ENCODE measurements at regions of chr11 and their contacts with region 1.

Region 1: DNA sequence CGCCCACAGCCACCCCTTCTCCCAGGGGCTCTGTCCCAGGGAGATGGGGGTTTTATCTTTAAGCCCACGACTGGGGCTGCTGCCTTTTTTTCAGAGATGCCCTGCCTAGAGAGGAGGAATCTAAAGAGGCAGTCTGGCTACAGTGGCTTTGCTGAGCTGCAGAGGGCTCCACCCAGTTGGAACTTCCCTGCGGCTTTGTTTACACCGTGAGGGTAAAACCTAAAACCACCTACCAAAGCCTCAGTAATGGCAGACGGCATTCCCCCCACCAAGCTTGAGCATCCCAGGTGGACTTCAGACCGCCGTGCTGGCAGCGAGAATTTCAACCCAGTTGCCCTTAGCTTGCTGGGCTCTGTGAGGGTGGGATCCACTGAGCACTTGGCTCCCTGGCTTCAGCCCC is 535.8 kb downstream of the NELL1 start:
- DNase-seq: no peak
- H3K4me3 ChIP-seq: no peak overlapping the region
- CTCF ChIP-seq: no peak

Region 2: DNA sequence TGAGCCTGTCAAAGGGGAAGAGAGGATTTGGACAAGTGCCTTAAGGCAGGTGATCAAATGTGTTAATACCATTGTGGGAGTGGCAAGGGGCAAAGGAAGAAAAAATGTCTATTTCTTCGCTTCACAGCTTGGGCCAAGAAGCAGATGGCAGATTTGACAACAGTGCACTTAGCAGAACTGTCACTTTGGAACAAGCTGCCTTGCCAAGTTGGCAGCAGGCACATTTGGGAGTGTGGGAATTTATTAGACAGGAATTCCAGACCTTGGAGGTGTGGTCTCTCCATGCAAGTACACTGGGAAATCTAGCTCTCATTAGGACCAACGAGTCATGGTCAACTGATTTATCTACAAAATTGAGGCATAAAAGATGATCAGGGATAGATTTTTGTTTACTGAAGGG is 270.7 kb before region 1 on chr11:
- in situ Hi-C with region 1: no loop called
- DNase-seq: no peak
- H3K4me3 ChIP-seq: no peak overlapping the region
- CTCF ChIP-seq: no peak

Region 3: GRCh38 chr11:21105196-21105917 is 99.8 kb before region 1 on chr11:
- in situ Hi-C with region 1: loop called (anchors 5 kb)
- DNase-seq: no peak
- H3K4me3 ChIP-seq: no peak overlapping the region
- CTCF ChIP-seq: no peak

Region 4: GRCh38 chr11:21169639-21170038 is 35.6 kb before region 1 on chr11:
- in situ Hi-C with region 1: no loop called
- DNase-seq: no peak
- H3K4me3 ChIP-seq: no peak overlapping the region
- CTCF ChIP-seq: no peak